Vagina (tissue), 2 donors: ENCODE measurements at regions of chr2 and their contacts with region 1.

Region 1: DNA sequence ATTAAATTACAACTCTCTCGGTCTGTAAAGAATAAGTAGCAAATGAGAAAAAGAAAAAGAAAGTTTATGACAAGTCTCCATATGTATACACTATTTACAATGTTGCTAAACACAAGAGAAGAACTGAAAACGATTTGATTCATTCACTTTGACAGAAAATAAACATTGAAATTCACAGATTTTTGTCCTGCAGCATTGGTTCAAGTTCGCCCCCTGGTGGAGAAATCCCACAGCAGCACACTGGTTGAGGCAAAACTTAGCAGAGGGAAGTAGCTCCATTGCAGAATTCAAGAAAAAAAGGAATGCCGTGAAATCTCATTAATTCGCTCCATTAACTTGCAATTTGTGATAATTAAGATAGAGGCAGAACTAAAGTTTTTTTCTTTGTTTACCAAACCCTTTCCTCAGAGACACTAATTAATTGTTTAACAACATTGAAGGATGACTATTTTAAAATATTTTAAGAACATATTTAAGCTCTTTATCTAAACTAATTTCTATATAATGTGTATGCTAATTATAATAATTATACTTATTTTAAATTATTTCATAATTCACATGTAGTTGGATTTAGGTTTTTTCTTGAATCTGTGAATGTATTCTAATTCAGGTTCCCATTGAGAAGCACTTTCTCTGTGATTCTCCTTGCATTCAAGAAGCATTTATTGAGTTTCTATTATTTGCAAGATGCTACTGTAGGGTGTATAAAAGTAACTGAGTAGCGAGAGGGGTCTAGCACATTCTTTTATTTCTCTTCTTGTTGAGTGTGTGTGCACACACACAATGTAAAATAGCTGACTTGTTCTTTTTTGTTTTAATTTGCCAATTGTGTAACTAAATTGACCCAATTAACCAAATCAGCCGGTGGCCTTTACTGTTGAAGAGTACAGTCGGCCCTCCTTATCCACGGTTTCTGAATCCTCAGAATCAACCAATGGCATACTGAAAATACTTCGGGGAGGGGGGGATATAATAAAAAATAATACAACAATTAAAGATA is 74.1 kb downstream of the COL4A3 start:
- DNase-seq: no peak
- H3K4me3 ChIP-seq: no peak overlapping the region
- H3K27ac ChIP-seq: no peak overlapping the region
- H3K4me1 ChIP-seq: no peaks in the 10 kb centered on the region
- H3K27me3 ChIP-seq: no peaks in the 10 kb centered on the region
- CTCF ChIP-seq: peak; percentile 73 to 82 (median 81)
- POLR2A ChIP-seq: no peak

Region 2: DNA sequence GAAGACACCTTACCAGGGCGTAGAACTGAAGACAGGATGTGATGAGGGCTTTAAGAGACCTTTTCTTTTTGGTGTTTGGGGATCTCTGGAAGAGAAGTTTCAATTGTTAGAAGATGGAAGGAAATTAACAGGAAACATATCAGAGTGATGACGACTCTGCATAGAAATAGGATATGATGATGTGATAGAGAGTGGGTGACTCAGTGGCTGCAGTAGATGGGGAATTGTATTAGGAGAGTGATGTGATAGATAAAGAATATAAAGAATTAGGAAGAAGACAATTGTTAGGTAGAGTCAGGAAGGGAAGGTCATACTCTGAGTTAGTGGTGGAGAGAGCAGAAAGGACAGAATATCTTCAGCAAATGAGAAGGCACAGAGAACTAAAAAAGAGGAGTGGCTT is 1245.1 kb before region 1 on chr2:
- intact Hi-C with region 1: no loop called
- DNase-seq: no peak
- H3K4me3 ChIP-seq: no peak overlapping the region
- H3K27ac ChIP-seq: no peak overlapping the region
- H3K4me1 ChIP-seq: no peaks in the 10 kb centered on the region
- H3K27me3 ChIP-seq: no peaks in the 10 kb centered on the region
- CTCF ChIP-seq: no peak
- POLR2A ChIP-seq: no peak

Region 3: GRCh38 chr2:226862623-226863022 is 375.9 kb before region 1 on chr2:
- intact Hi-C with region 1: no loop called
- DNase-seq: no peak
- H3K4me3 ChIP-seq: no peak overlapping the region
- H3K27ac ChIP-seq: no peak overlapping the region
- H3K4me1 ChIP-seq: no peaks in the 10 kb centered on the region
- H3K27me3 ChIP-seq: no peaks in the 10 kb centered on the region
- CTCF ChIP-seq: no peak
- POLR2A ChIP-seq: no peak

Region 4: DNA sequence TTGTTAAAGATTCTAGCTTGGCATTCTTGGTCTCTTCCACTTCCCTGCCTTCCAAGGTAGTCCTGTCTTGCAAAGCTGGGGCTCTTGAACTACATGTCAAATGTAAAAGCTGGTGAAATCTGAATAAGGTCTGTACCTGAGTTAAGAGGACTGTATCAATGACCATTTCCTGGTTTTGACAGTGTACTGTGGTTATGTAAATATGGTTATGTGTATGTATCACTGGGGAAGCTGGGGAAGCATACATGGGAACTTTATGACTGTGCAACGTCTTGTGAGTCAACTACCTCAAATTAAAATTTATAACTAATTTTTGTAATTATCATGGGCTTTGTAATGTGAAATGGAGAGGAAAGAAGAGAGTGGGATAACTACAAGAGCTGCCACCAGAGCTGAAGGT is 156.3 kb before region 1 on chr2:
- intact Hi-C with region 1: no loop called
- DNase-seq: no peak
- H3K4me3 ChIP-seq: no peak overlapping the region
- H3K27ac ChIP-seq: no peak overlapping the region
- H3K4me1 ChIP-seq: no peaks in the 10 kb centered on the region
- H3K27me3 ChIP-seq: no peaks in the 10 kb centered on the region
- CTCF ChIP-seq: no peak
- POLR2A ChIP-seq: no peak

Region 5: DNA sequence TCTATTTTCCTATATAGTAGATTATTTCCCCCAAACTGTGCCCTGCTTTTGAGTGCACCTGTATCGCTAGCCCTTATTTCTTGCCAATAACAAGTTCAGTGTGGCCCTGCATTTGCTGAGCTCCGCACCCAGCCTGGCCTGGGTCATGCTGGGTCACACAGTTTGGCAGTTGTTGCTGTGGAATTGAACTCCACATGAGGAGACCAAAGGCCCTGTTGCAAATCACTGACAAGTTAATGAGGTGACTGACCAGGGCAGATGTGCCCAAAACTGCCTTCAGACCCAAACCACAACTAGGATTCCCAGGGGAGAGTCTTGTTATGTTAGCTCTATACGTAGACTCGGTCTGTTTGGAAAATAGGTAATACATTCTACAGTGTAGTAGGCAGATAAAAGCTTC is 105.6 kb before region 1 on chr2:
- intact Hi-C with region 1: loop called (anchors 5 kb)
- DNase-seq: no peak
- H3K4me3 ChIP-seq: no peak overlapping the region
- H3K27ac ChIP-seq: no peak overlapping the region
- H3K4me1 ChIP-seq: no peaks in the 10 kb centered on the region
- H3K27me3 ChIP-seq: no peaks in the 10 kb centered on the region
- CTCF ChIP-seq: no peak
- POLR2A ChIP-seq: no peak

Region 6: DNA sequence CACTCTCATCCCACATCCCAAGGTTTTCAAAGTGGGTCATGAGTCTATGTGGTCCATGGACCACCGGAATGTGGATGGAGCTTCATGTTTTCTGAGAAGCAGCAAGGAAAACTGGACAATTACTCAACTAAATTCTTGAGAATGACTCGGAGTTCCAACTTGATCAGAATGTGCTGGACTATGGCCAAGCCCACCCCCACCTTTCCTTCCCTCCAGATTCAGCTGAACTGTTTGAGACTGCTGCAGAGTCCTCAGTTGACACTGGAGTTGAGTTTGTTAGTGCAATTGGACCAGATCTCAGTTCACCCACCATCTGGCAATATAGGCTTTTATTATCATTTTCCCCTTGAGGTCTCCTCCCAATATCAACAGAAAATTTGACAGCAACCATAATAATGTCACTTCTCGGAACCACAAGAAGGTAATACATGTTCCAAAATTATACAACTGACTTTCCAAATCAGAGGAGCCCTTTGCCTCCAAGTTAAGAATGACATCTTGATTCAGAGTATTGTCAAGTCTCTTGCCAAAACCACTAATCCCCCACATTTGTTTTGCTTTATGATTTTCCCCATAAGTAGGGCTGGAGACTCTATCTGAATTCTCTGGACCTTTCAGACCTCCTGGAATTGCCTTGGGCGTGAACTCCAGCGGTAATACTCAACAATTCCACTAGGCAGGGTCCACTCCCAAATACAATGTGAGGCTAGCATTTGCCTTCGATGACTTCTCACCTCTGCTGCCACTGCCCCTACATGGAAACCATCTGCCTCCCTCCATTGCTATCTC is 83.4 kb before region 1 on chr2:
- intact Hi-C with region 1: no loop called
- DNase-seq: no peak
- H3K4me3 ChIP-seq: no peak overlapping the region
- H3K27ac ChIP-seq: no peak overlapping the region
- H3K4me1 ChIP-seq: no peaks in the 10 kb centered on the region
- H3K27me3 ChIP-seq: no peaks in the 10 kb centered on the region
- CTCF ChIP-seq: no peak
- POLR2A ChIP-seq: no peak